Activated CD8-positive, alpha-beta memory T cell treated with anti-CD3 and anti-CD28 coated beads, Interleukin-2, amount 10 ng/mL, durations not matched to agents 7 days and 5 days (primary cell): ENCODE measurements at regions of chr10 and their contacts with region 1.

Region 1: DNA sequence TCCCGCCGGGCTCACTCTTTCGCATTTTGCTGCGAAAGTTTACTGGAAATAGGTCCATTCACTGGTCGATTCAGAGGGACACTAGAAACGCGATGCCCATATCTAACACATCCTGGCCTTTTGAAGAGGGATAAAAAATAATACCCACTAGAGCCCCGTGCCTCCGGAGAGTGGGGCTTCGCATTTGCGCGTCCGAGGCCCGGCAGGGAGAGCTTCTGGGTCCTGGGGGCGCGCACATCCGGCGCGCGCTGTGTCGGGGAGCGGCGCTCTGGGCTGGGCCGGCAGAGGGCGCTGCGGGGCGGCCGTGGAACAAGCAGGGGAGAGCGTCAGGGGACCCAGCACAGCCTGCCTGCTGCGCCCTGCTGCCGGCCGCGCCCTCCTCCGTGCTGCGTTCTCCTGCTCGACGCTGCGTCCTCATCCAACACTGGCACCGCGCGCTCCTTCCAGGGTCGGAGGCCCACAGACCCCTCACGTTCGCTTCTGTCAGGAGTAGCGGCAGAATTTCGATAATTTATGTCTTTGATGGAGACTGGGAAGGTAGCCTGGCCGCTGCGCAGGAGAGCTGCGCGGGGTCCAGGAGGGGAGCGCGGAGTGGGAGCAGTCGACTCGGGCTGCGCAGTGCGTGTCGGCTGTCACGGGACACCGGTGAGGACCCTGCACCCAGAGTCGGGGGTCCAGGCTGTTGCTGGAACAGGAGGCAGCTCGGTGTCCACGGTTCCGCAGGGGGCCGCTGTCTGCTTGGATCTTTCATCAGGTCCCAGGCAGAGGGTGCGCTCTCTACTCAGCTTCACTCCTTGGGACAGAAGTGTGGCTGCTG is 41.5 kb upstream of the ZNF32 start:
- DNase-seq: peak; percentile 86
- ATAC-seq: peak; percentile 99
- H3K4me3 Mint-ChIP-seq: peak overlapping the region; percentile 74
- H3K27ac Mint-ChIP-seq: peak overlapping the region; percentile 61
- H3K4me1 Mint-ChIP-seq: peaks cover 7% of the 10 kb centered on the region
- H3K27me3 Mint-ChIP-seq: peaks cover 40% of the 10 kb centered on the region

Region 2: DNA sequence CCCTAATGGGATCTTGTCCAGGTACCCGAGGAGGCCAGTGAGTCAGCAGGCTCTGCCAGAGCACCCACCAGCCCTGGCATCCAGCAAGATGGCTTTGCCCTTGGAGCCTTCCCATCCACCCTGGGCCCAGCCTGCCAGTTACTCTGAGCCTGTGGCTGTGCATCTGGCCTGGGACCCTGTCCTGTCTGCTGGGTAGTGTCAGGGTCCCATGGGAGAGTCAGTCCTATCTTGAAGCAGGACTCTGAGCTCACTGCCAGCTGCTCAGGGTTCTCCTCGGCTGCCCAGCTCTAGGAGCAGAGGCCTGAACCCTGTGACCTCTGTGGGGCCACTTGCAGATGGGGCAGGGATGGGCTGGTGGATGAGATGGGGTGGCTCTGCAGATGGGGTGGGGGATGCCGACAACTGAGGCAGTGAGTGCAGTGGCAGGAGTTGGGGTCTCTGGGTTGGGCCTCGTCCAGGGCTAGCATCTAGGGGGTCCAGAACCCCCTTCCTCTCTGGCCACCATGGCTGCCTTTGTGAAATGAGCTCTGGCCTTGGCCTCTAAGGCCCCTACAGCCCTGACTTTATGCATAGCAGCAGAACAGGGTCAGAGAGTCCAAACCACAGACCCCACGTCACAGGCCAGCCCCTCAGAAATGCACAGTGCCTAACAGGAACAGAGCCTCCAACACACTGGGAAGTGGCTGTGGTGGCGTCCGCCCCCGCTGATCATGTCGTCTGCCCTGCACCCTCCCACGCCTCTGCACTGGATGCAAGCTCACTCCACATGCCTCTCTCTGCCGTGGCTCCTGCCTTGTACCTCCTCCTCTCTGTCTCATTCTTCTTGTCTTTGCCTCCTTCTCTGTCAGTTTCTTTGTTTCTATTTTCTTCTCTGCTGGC is 701.4 kb before region 1 on chr10:
- CTCF ChIA-PET with region 1: no interaction called
- DNase-seq: peak; percentile 43
- ATAC-seq: no peak
- H3K4me3 Mint-ChIP-seq: no peak overlapping the region
- H3K27ac Mint-ChIP-seq: no peak overlapping the region
- H3K4me1 Mint-ChIP-seq: peaks cover 5% of the 10 kb centered on the region
- H3K27me3 Mint-ChIP-seq: no peaks in the 10 kb centered on the region

Region 3: DNA sequence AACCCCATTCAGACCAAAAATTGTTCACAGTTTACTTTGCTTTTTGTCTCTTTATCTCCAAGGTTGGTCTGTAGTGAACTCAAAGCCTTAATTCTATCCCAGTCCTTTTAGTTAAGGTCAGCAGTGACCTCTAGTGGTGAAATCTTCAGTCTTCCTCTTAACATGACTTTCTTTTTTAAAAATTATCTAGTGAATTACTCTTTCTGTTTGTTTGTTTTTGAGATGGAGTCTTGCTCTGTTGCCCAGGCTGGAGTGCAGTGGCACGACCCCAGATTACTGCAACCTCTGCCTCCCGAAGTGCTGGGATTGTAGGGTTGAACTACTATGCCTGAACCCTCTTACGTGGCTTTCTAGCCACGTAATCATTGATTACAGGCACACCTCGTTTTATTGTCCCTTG is 228.2 kb before region 1 on chr10:
- CTCF ChIA-PET with region 1: no interaction called
- DNase-seq: no peak
- ATAC-seq: peak; percentile 95
- H3K4me3 Mint-ChIP-seq: no peak overlapping the region
- H3K27ac Mint-ChIP-seq: no peak overlapping the region
- H3K4me1 Mint-ChIP-seq: peaks cover 15% of the 10 kb centered on the region
- H3K27me3 Mint-ChIP-seq: no peaks in the 10 kb centered on the region

Region 4: GRCh38 chr10:43671656-43672531 is 18.3 kb before region 1 on chr10:
- CTCF ChIA-PET with region 1: interaction called, 10 read pairs
- DNase-seq: peak; percentile 56
- ATAC-seq: peak; percentile 63
- H3K4me3 Mint-ChIP-seq: no peak overlapping the region
- H3K27ac Mint-ChIP-seq: no peak overlapping the region
- H3K4me1 Mint-ChIP-seq: no peaks in the 10 kb centered on the region
- H3K27me3 Mint-ChIP-seq: peaks cover 36% of the 10 kb centered on the region

Region 5: DNA sequence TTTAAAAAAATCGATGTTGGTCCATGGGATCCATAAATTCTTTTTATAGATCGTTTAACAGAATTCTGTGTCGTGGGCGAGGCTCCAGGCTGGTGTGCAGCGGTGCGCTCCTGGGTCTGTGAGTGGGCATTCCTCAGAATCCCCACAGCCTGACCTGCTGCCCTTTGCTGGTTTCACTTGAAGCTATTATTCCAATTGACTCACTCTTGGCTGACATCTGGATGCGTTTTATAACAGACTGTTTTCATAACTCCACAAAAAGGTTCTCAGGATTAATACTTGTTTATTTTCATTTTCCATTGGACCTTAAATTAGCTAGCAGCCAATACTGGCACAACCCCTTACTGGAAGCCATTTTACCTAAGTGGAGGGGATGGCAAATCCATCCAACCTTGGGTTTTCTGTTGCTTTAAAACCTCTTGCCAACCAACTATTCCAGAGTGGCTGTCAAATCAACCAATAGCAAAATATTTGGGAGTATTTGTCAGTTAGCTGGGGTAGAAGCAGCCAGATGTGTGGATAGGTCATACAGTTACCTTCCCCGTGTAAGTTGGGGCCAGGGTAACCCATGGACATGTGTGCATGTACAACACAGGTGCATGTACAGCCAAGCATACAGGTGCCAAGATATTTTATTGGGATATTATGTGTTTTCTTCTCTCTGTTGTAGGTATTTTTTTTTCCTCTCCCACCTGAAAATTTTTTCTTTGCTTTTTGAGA is 119.2 kb after region 1 on chr10:
- CTCF ChIA-PET with region 1: interaction called, 11 read pairs
- DNase-seq: no peak
- ATAC-seq: no peak
- H3K4me3 Mint-ChIP-seq: no peak overlapping the region
- H3K27ac Mint-ChIP-seq: no peak overlapping the region
- H3K4me1 Mint-ChIP-seq: peaks cover 45% of the 10 kb centered on the region
- H3K27me3 Mint-ChIP-seq: peaks cover 52% of the 10 kb centered on the region

Region 6: DNA sequence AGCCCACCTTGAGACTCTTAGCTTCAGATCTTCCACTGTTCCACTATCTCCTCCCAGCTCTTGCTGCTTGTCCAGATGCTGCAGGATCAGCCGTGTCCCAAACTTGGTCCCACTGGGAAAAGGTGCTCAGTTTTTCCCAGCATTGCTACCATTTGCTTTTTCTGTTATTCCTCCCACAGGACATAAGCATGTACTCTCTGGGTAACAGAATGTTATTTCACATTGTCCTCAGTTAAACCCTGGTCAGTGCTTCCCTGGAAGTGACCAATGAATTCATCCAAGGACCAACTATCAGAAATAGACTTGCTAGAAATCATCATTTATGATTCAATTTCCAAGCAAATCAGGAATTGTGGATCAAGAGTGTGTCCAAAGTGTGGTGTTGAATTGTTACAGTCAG is 137.7 kb after region 1 on chr10:
- CTCF ChIA-PET with region 1: no interaction called
- DNase-seq: no peak
- ATAC-seq: no peak
- H3K4me3 Mint-ChIP-seq: no peak overlapping the region
- H3K27ac Mint-ChIP-seq: no peak overlapping the region
- H3K4me1 Mint-ChIP-seq: peaks cover 11% of the 10 kb centered on the region
- H3K27me3 Mint-ChIP-seq: peaks cover 28% of the 10 kb centered on the region

Region 7: GRCh38 chr10:44030143-44030542 is 340.0 kb after region 1 on chr10:
- CTCF ChIA-PET with region 1: interaction called, 13 read pairs
- DNase-seq: no peak
- ATAC-seq: no peak
- H3K4me3 Mint-ChIP-seq: no peak overlapping the region
- H3K27ac Mint-ChIP-seq: no peak overlapping the region
- H3K4me1 Mint-ChIP-seq: no peaks in the 10 kb centered on the region
- H3K27me3 Mint-ChIP-seq: peaks cover 18% of the 10 kb centered on the region

Region 8: GRCh38 chr10:44386546-44387052 is 696.4 kb after region 1 on chr10:
- CTCF ChIA-PET with region 1: interaction called, 24 read pairs
- DNase-seq: peak; percentile 41
- ATAC-seq: peak; percentile 30
- H3K4me3 Mint-ChIP-seq: no peak overlapping the region
- H3K27ac Mint-ChIP-seq: no peak overlapping the region
- H3K4me1 Mint-ChIP-seq: peaks cover 6% of the 10 kb centered on the region
- H3K27me3 Mint-ChIP-seq: peaks cover 32% of the 10 kb centered on the region